ENCODE measurements at regions of chr5 and their contacts with region 1.

Region 1: GRCh38 chr5:23648656-23649055 is 141.2 kb downstream of the PRDM9 start:
- DNase-seq: no peak
- H3K4me3 ChIP-seq: no peak overlapping the region
- H3K4me3 Mint-ChIP-seq: no peak overlapping the region
- H3K27ac Mint-ChIP-seq: no peak overlapping the region
- H3K4me1 ChIP-seq: no peaks in the 10 kb centered on the region
- H3K4me1 Mint-ChIP-seq: peaks cover 10% of the 10 kb centered on the region
- H3K27me3 ChIP-seq: no peaks in the 10 kb centered on the region
- H3K27me3 Mint-ChIP-seq: no peaks in the 10 kb centered on the region
- CTCF ChIP-seq: no peak

Region 2: GRCh38 chr5:23635938-23636337 is 12.7 kb before region 1 on chr5:
- CTCF ChIA-PET with region 1: no interaction called
- POLR2A ChIA-PET with region 1: no interaction called
- intact Hi-C with region 1: no loop called
- DNase-seq: no peak
- H3K4me3 ChIP-seq: no peak overlapping the region
- H3K4me3 Mint-ChIP-seq: no peak overlapping the region
- H3K27ac Mint-ChIP-seq: no peak overlapping the region
- H3K4me1 ChIP-seq: no peaks in the 10 kb centered on the region
- H3K4me1 Mint-ChIP-seq: no peaks in the 10 kb centered on the region
- H3K27me3 ChIP-seq: no peaks in the 10 kb centered on the region
- H3K27me3 Mint-ChIP-seq: no peaks in the 10 kb centered on the region
- CTCF ChIP-seq: no peak

Region 3: DNA sequence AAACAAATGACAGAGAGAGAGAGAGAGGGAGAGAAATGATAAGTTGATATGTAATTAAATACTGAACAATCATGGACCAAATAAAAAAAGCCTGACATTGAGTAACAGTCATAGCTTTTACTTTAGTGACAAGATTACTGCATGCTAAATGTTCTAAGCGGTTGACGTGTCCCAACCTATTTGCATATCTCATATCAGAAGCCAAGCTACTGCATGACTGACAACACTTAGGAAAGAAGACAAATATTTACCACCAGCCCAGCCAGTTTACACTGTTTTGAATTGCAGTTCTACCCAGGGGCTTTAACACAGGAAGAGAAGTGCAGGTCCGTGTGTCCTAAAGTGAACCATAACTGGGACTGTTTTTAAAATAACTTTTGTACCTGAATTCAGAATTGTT is 78.6 kb after region 1 on chr5:
- CTCF ChIA-PET with region 1: no interaction called
- POLR2A ChIA-PET with region 1: no interaction called
- intact Hi-C with region 1: loop called (anchors 5 kb)
- DNase-seq: peak in 1 of 2 experiments; percentile 31
- H3K4me3 ChIP-seq: no peak overlapping the region
- H3K4me3 Mint-ChIP-seq: no peak overlapping the region
- H3K27ac Mint-ChIP-seq: no peak overlapping the region
- H3K4me1 ChIP-seq: peaks cover 16% of the 10 kb centered on the region
- H3K4me1 Mint-ChIP-seq: peaks cover 29% of the 10 kb centered on the region
- H3K27me3 ChIP-seq: no peaks in the 10 kb centered on the region
- H3K27me3 Mint-ChIP-seq: no peaks in the 10 kb centered on the region
- CTCF ChIP-seq: no peak

Measured in Caco-2 (cell line).